Head of caudate nucleus (tissue), 42 donors: ENCODE measurements at regions of chr9 and their contacts with region 1.

Region 1: DNA sequence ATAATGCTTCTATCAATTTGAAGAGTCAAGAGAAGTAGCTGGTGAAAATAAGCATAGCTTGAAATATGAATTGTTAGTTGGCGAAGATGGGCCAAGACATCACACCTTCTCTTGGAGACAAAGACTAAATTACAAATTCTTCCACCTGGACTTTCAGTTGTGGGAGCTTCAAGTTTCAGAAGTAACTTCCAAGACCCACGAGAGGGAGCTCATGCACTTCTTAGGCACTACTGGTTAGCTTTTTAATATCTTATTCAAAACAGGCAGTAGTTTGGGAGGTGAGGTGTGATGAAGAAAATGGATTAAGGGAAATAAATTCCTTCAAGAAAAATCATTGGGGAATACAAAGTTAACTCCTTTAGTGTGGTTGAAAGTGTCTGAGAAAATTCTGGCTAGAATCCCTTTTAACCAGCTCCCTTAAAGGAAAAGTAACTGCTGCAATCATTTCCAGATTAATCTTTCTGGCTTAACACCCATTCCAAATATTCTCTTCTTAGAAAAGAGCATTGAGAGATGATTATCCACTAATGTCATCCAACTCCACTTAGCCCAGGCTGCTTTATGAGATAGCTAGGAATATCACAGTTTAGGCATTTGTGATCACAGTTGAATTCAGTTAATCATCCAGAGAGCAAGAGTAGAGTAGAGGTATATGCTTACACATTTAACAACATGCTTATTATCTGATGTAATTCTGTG is 139.5 kb upstream of the DMRTA1 start:
- DNase-seq: peak in 29 of 42 donors; percentile 5 to 66 (median 32)

Region 2: DNA sequence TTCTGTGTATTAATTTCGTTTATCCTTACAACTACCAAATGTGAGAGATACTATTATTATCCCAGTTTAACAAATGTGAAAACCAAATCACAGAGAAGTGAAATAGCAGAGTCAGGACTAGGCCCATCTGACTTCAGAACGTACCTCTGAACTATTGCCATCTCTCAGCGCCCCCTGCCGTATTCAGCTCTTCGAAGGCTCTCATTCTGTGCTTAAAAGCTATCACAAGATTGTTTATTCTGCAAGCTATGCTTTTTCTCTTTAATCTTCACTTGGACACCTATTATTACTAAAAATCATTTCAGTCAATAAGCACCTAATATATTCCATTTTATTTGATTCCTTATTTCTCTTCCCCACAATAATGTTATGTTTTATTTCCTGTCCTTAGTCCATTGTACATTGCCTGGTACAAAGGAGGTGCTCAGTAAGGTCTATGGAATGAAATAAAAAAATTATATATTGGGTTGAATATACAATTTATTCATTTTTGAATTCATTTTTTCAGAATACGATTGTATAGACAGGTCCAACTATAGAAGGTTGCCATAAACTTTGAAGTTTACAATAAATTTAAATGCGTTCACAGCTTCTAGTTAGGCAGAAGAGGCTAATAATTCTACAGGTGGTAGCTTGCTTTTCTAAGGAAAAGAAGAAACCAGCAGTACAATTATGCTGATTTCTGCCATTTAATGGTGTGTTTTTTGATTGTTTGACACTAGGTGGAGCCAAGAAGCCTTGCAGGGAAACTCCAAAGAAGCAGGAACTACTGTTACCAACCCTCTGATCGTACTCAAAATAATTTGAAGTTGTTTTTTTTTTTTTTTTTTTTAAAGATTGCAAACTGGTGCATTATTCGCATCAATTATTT is 62.8 kb before region 1 on chr9:
- intact Hi-C with region 1: no loop called
- DNase-seq: peak in 2 of 42 donors; percentile 8 to 24

Region 3: DNA sequence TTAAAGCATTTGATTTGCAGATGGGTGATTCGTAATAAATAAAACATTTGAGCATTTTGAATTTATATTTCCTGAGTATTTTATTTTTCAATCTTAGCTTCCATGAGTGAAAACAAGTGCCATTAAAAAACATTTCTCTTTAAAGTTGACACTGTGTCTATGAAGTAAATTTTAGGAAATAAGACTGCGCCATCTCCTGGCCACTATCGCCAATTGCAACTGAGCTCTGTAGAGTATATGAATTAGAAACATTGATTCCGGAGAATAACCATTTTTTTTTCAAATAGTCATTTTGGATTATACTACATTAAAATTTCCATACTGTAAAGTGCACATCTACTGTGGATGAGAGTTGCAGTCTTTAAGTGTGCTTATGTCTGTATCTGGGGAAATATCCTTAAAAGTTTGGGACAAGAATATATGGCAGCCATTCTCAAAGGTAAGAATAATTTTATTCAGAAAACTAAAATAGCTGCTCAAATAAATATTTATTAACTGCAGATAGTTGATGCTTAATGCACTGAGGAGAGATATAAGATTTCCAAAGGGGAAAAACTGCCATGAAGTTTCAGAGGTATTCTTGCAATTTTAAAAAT is 145.4 kb after region 1 on chr9:
- intact Hi-C with region 1: loop called (anchors 5 kb)
- DNase-seq: peak in 41 of 42 donors; percentile 14 to 83 (median 62)